ENCODE measurements at regions of chr17 and their contacts with region 1.

Region 1: GRCh38 chr17:56165072-56165651 is 11.9 kb downstream of the ANKFN1 start:
- DNase-seq: no peak
- H3K4me3 ChIP-seq: no peak overlapping the region
- H3K27ac ChIP-seq: no peak overlapping the region
- H3K4me1 ChIP-seq: peaks cover under 1% of the 10 kb centered on the region
- H3K27me3 ChIP-seq: no peaks in the 10 kb centered on the region
- CTCF ChIP-seq: no peak
- POLR2A ChIP-seq: no peak

Region 2: GRCh38 chr17:56222255-56222654 is 57.1 kb after region 1 on chr17:
- intact Hi-C with region 1: loop called (anchors 10 kb)
- DNase-seq: no peak
- H3K4me3 ChIP-seq: no peak overlapping the region
- H3K27ac ChIP-seq: no peak overlapping the region
- H3K4me1 ChIP-seq: no peaks in the 10 kb centered on the region
- H3K27me3 ChIP-seq: no peaks in the 10 kb centered on the region
- CTCF ChIP-seq: no peak
- POLR2A ChIP-seq: no peak